Posterior vena cava (tissue), 2 donors: ENCODE measurements at regions of chr6 and their contacts with region 1.

Region 1: DNA sequence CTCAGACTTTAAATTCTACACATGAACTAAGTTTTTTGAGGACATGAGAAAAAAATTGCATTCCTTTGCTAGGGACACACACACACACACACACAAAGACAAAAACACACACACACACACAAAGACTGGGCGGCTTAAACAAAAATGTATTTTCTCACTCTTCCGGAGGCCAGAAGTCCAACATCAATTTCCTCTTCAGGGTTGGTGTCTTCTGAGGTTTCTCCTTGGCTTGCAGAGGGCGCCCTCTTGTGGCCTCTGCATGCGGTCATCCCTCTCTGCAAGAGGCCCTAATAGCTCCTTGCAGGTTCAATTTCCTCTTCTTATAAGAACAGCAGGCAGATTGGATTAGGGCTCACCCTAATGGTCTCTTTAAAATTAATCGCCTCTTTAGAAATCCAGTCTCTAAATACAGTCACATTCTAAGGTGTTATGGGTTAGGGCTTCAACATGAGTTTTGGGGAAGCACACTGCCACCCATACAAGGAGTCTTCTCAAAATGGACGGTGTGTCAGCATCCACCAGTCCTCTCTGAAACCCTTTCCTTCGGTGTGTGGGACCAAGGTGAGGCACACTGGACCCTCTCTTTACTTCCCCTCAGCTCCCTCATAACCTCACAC is 61.4 kb downstream of the GPR6 start:
- DNase-seq: peak; percentile 94

Region 2: GRCh38 chr6:109705258-109705657 is 334.2 kb before region 1 on chr6:
- intact Hi-C with region 1: loop called in 1 of 2 experiments (anchors 5 kb)
- DNase-seq: peak; percentile 91